B cell (primary cell): ENCODE measurements at regions of chr16 and their contacts with region 1.

Region 1: DNA sequence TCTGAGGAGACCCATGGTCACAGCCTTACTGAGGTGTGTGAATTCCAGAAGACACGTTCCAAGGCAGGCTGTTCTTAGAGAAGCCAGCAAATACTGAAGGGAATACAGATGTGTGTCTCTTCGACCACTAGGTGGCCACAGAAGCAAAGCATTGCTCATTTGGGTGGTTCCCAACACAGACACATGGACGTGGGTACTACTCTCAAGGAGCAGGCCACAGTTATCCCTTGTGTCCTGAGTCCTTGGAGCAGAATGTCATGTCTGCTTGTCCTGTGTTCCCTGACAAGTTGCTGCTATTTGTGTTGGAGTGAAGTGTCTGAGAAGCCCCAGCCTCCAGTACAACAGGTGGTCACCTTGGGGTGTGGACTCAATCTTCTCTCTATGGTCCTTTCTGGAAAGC is 30.3 kb downstream of the HMOX2 start:
- DNase-seq: peak; percentile 83
- ATAC-seq: no peak
- H3K4me3 ChIP-seq: no peak overlapping the region
- H3K4me3 Mint-ChIP-seq: peak overlapping the region; percentile 56
- H3K27ac ChIP-seq: peak overlapping the region; percentile 96
- H3K27ac Mint-ChIP-seq: peak overlapping the region; percentile 98
- H3K4me1 ChIP-seq: peaks cover 37 to 41% of the 10 kb centered on the region in 2 donors
- H3K4me1 Mint-ChIP-seq: peaks cover 37% of the 10 kb centered on the region
- H3K27me3 ChIP-seq: no peaks in the 10 kb centered on the region
- H3K27me3 Mint-ChIP-seq: no peaks in the 10 kb centered on the region
- CTCF ChIP-seq: peak; percentile 87

Region 2: GRCh38 chr16:4371357-4372000 is 135.0 kb before region 1 on chr16 and contains the start of gene VASN:
- CTCF ChIA-PET with region 1: no interaction called
- POLR2A ChIA-PET with region 1: no interaction called
- intact Hi-C with region 1: no loop called
- DNase-seq: peak; percentile 81
- ATAC-seq: peak; percentile 87
- H3K4me3 ChIP-seq: peak within 1 kb of the TSS in 3 of 5 experiments; percentile 38 to 60 (median 47)
- H3K4me3 Mint-ChIP-seq: peak within 1 kb of the TSS; percentile 84
- H3K27ac ChIP-seq: no peak within 1 kb of the TSS
- H3K27ac Mint-ChIP-seq: no peak within 1 kb of the TSS
- H3K4me1 ChIP-seq: peaks cover 18 to 25% of the 10 kb centered on the region in 2 donors
- H3K4me1 Mint-ChIP-seq: peaks cover 29% of the 10 kb centered on the region
- H3K27me3 ChIP-seq: no peaks in the 10 kb centered on the region
- H3K27me3 Mint-ChIP-seq: no peaks in the 10 kb centered on the region
- CTCF ChIP-seq: no peak
- total RNA-seq, gene VASN: 0.66 and 0.76 TPM in 2 replicates

Region 3: GRCh38 chr16:4416200-4417032 is 90.0 kb before region 1 on chr16 and contains the start of gene CORO7:
- CTCF ChIA-PET with region 1: interaction called, 8 read pairs
- POLR2A ChIA-PET with region 1: no interaction called
- intact Hi-C with region 1: loop called (anchors 1 kb)
- DNase-seq: peak; percentile 99
- ATAC-seq: peak; percentile 90
- H3K4me3 ChIP-seq: peak within 1 kb of the TSS; percentile 62 to 94 (median 78)
- H3K4me3 Mint-ChIP-seq: peak within 1 kb of the TSS; percentile 96
- H3K27ac ChIP-seq: peak within 1 kb of the TSS; percentile 91 to 95
- H3K27ac Mint-ChIP-seq: peak within 1 kb of the TSS; percentile 95
- H3K4me1 ChIP-seq: peaks cover 24 to 35% of the 10 kb centered on the region in 2 donors
- H3K4me1 Mint-ChIP-seq: peaks cover 31% of the 10 kb centered on the region
- H3K27me3 ChIP-seq: no peaks in the 10 kb centered on the region
- H3K27me3 Mint-ChIP-seq: no peaks in the 10 kb centered on the region
- CTCF ChIP-seq: no peak
- total RNA-seq, gene CORO7: 114 and 117 TPM in 2 replicates

Region 4: GRCh38 chr16:4475880-4476788 is 30.3 kb before region 1 on chr16 and contains the start of gene HMOX2:
- CTCF ChIA-PET with region 1: interaction called, 70 read pairs
- POLR2A ChIA-PET with region 1: interaction called, 19 read pairs
- intact Hi-C with region 1: loop called (anchors 1 kb)
- DNase-seq: peak; percentile 96
- ATAC-seq: peak; percentile 93
- H3K4me3 ChIP-seq: peak within 1 kb of the TSS; percentile 57 to 96 (median 86)
- H3K4me3 Mint-ChIP-seq: peak within 1 kb of the TSS; percentile 84
- H3K27ac ChIP-seq: peak within 1 kb of the TSS; percentile 28 to 78
- H3K27ac Mint-ChIP-seq: peak within 1 kb of the TSS; percentile 92
- H3K4me1 ChIP-seq: peaks cover 19 to 37% of the 10 kb centered on the region in 2 donors
- H3K4me1 Mint-ChIP-seq: peaks cover 34% of the 10 kb centered on the region
- H3K27me3 ChIP-seq: no peaks in the 10 kb centered on the region
- H3K27me3 Mint-ChIP-seq: no peaks in the 10 kb centered on the region
- CTCF ChIP-seq: peak; percentile 56
- total RNA-seq, gene HMOX2: 36.5 TPM in 2 replicates

Region 5: GRCh38 chr16:4550591-4550990 is 44.1 kb after region 1 on chr16:
- CTCF ChIA-PET with region 1: interaction called, 178 read pairs
- POLR2A ChIA-PET with region 1: interaction called, 6 read pairs
- intact Hi-C with region 1: loop called (anchors 1 kb)
- DNase-seq: no peak
- ATAC-seq: no peak
- H3K4me3 ChIP-seq: no peak overlapping the region
- H3K4me3 Mint-ChIP-seq: no peak overlapping the region
- H3K27ac ChIP-seq: no peak overlapping the region
- H3K27ac Mint-ChIP-seq: peak overlapping the region; percentile 53
- H3K4me1 ChIP-seq: peaks cover 0 to 9% of the 10 kb centered on the region in 2 donors
- H3K4me1 Mint-ChIP-seq: peaks cover 3% of the 10 kb centered on the region
- H3K27me3 ChIP-seq: no peaks in the 10 kb centered on the region
- H3K27me3 Mint-ChIP-seq: peaks cover 6% of the 10 kb centered on the region
- CTCF ChIP-seq: no peak

Region 6: DNA sequence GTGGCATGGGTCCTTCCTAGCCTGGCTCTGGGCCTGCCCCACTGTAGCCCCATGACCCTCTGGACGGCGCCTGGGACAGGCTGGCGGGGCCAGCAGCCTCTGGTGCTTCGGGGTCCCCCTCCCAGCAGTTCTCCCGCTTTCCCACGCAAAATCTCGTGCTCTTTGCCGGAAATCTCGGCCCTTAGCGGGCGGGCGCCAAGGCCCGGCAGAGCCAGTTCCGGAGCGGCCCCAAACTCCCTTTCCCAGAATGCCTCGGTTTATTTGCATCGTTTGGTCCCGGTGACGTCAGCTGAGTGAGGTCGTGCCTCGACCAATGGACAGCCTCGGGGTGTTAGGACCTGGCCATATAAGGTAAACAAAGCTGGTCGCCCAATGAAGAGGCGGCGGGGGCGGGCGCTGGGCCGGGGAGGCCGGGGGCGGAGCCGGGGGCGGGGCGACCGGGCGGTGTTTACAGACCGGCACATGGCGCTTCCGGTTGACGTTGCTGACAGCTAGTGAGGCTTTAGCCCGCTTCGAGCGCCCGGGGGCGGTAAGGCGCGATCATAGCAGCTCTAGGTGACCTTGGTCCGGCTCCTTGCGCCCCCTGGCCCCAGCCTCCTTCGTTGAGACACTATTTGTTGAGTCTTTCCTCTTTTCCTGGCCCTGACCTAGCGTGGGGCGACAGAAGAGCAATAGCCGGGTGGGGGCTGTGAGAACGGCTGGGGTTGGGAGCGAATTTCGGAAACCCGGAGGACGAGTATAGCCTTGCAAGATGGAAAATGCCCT is 109.8 kb after region 1 on chr16:
- CTCF ChIA-PET with region 1: interaction called, 17 read pairs
- POLR2A ChIA-PET with region 1: interaction called, 10 read pairs
- intact Hi-C with region 1: loop called (anchors 1 kb)
- DNase-seq: peak; percentile 99
- ATAC-seq: peak; percentile 84
- H3K4me3 ChIP-seq: peak overlapping the region; percentile 4 to 81 (median 55)
- H3K4me3 Mint-ChIP-seq: peak overlapping the region; percentile 92
- H3K27ac ChIP-seq: peak overlapping the region; percentile 86 to 96
- H3K27ac Mint-ChIP-seq: peak overlapping the region; percentile 92
- H3K4me1 ChIP-seq: peaks cover 28 to 39% of the 10 kb centered on the region in 2 donors
- H3K4me1 Mint-ChIP-seq: peaks cover 29% of the 10 kb centered on the region
- H3K27me3 ChIP-seq: no peaks in the 10 kb centered on the region
- H3K27me3 Mint-ChIP-seq: no peaks in the 10 kb centered on the region
- CTCF ChIP-seq: peak; percentile 64

Region 7: DNA sequence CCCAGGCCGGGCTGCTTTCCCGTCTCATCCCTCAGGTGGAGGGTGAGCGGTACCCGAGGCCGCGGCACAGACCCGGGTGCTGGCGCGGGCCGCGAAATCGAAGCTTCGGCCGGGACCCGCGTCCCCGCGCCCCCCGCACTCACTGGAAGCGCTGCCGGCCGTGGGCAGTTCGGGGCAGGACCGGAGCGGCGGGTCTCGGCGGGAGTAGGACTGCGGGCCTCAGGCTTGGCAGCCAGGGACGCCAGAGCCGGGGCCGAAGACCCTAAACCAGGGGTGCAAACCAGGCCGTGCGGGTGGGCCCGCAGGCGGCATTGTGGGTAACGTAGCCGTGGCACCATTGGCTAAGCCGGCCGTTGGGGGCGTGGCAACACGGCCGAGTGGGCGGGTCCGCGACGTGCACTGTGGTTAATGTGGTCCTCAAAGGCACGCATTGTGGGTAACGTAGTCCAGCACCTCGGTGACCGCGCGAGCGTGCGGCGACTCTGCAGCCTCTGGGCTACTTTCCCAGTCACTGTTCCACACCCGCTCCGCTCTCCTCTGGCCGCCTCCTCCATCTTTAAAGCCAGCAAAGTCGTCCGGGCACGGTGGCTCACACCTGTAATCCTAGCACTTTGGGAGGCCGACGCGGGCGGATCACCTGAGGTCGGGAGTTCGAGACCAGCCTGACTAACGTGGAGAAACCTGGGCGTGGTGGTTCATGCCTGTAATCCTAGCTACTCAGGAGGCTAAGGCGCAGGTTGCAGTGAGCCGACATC is 260.6 kb after region 1 on chr16 and contains the start of gene ZNF500:
- CTCF ChIA-PET with region 1: no interaction called
- POLR2A ChIA-PET with region 1: no interaction called
- intact Hi-C with region 1: loop called (anchors 1 kb)
- DNase-seq: peak; percentile 95
- ATAC-seq: peak; percentile 91
- H3K4me3 ChIP-seq: peak within 1 kb of the TSS; percentile 69 to 94 (median 87)
- H3K4me3 Mint-ChIP-seq: peak within 1 kb of the TSS; percentile 98
- H3K27ac ChIP-seq: peak within 1 kb of the TSS in 1 of 2 donors; percentile 80
- H3K27ac Mint-ChIP-seq: peak within 1 kb of the TSS; percentile 95
- H3K4me1 ChIP-seq: peaks cover 15 to 33% of the 10 kb centered on the region in 2 donors
- H3K4me1 Mint-ChIP-seq: peaks cover 31% of the 10 kb centered on the region
- H3K27me3 ChIP-seq: no peaks in the 10 kb centered on the region
- H3K27me3 Mint-ChIP-seq: no peaks in the 10 kb centered on the region
- CTCF ChIP-seq: no peak
- total RNA-seq, gene ZNF500: 26.5 and 35.7 TPM in 2 replicates